Sigmoid colon (tissue), 7 donors: ENCODE measurements at regions of chr11 and their contacts with region 1.

Region 1: DNA sequence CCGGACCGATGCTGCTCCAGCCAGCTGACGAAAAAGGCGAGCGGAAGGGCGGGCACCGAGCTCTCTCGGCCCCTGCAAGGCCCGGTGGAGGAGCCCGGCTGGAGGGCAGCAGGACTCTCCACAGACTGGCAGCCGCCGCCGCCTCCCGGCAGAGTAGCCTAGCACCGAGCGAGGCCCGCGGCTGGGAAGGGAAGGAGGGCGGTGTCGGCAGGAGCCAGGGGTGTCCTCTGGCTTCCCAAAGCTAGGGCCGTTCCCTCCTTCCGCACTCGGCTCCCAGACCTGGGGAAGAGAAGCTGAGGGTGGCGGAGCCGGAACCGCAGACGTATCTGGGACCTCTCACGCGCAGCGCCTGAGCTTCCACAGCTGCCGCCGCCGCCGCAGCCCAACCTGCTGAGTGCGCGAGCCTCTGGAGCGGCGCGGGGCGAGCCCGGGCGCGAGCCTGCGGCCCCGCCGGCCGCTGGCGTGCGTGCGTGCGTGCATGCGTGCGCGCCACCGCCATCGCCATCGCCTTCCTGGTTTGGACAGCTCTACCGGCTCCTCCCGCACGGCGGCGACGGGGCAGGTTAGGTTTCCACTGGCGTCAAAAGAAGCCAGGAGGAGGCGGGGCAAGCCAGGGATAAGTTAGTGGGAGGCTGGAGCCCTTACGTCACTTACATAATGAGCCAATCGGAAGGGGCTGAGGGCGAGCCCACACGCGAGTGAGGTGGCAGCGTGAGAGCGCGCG is at the start of gene RAB6A:
- DNase-seq: peak; percentile 100
- H3K4me3 ChIP-seq: peak within 1 kb of the TSS; percentile 72 to 95 (median 82)
- H3K27ac ChIP-seq: peak within 1 kb of the TSS; percentile 97 to 100 (median 98)
- H3K4me1 ChIP-seq: peaks cover 0 to 33% (median 30%) of the 10 kb centered on the region in 4 donors
- H3K27me3 ChIP-seq: no peaks in the 10 kb centered on the region
- CTCF ChIP-seq: peak in 3 of 4 experiments; percentile 22 to 32 (median 26)
- EP300 ChIP-seq: peak in 1 of 4 donors; percentile 38
- POLR2A ChIP-seq: peak; percentile 68 to 82
- total RNA-seq, gene RAB6A: 110 to 162 (median 140) TPM

Region 2: GRCh38 chr11:73779084-73779902 is 18.5 kb after region 1 on chr11:
- intact Hi-C with region 1: loop called (anchors 1 kb)
- DNase-seq: peak; percentile 99
- H3K4me3 ChIP-seq: peak overlapping the region; percentile 43 to 67 (median 52)
- H3K27ac ChIP-seq: peak overlapping the region; percentile 92 to 97 (median 92)
- H3K4me1 ChIP-seq: peaks cover 0 to 5% (median 2%) of the 10 kb centered on the region in 4 donors
- H3K27me3 ChIP-seq: no peaks in the 10 kb centered on the region
- CTCF ChIP-seq: no peak
- EP300 ChIP-seq: no peak
- POLR2A ChIP-seq: peak in 1 of 2 donors; percentile 40

Region 3: GRCh38 chr11:73787643-73788537 is 27.0 kb after region 1 on chr11 and contains the start of gene MRPL48:
- intact Hi-C with region 1: loop called (anchors 2 kb)
- DNase-seq: peak; percentile 94
- H3K4me3 ChIP-seq: peak within 1 kb of the TSS; percentile 54 to 78 (median 73)
- H3K27ac ChIP-seq: peak within 1 kb of the TSS; percentile 79 to 95 (median 80)
- H3K4me1 ChIP-seq: peaks cover 0 to 18% (median 18%) of the 10 kb centered on the region in 4 donors
- H3K27me3 ChIP-seq: no peaks in the 10 kb centered on the region
- CTCF ChIP-seq: no peak
- EP300 ChIP-seq: no peak
- POLR2A ChIP-seq: no peak
- total RNA-seq, gene MRPL48: 7.7 to 33.2 (median 19.8) TPM

Region 4: GRCh38 chr11:73839123-73839457 is 78.2 kb after region 1 on chr11:
- intact Hi-C with region 1: no loop called
- DNase-seq: no peak
- H3K4me3 ChIP-seq: no peak overlapping the region
- H3K27ac ChIP-seq: no peak overlapping the region
- H3K4me1 ChIP-seq: no peaks in the 10 kb centered on the region
- H3K27me3 ChIP-seq: no peaks in the 10 kb centered on the region
- CTCF ChIP-seq: no peak
- EP300 ChIP-seq: no peak
- POLR2A ChIP-seq: no peak

Region 5: DNA sequence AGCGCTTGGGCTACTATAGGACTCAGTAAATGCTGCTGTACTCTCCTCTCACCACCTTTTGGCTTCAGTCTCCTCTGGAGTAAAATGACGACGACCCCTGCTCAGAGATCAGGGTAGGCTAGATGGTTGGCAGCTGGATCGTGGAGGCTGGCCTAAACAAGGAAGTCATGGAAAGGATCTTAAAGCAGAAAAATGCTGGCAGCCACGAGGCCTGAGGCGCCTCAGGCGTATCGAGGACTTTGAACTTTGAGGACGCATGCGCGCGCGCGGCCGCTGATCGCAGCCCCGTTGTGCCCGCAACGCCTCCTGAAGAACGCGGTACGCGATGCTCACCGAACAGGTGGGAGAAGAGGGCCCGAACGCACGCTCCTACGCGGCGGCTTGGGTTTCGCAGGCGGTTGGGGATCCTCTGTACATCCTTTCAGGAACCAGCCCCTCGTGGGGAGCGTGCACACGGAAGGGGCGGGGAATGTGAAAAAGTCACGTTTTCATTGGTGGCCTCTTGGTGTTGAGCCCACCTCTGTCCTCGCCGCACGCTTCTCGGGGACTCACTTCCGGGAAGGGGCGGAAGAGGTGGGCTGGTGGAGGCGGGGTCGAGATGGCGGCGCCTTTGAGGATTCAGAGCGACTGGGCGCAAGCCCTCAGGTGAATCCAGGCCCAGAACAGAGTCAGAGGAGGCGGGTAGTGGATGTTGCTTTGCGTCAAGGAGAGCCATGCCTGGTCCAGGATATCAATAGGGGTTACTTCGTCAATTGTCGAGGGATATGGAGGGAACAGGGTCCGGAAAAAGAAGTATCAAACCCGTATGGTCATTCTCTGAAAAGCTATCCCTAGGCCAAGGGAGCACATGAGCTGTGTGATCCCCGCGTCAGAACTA is 115.8 kb after region 1 on chr11 and contains the starts of genes COA4 and PAAF1:
- intact Hi-C with region 1: loop called (anchors 2 kb)
- DNase-seq: peak; percentile 97
- H3K4me3 ChIP-seq: peak within 1 kb of the TSS; percentile 69 to 83 (median 76)
- H3K27ac ChIP-seq: peak within 1 kb of the TSS; percentile 82 to 92 (median 87)
- H3K4me1 ChIP-seq: peaks cover 0 to 22% (median 17%) of the 10 kb centered on the region in 4 donors
- H3K27me3 ChIP-seq: no peaks in the 10 kb centered on the region
- CTCF ChIP-seq: no peak
- EP300 ChIP-seq: no peak
- POLR2A ChIP-seq: peak in 1 of 2 donors; percentile 38
- total RNA-seq, gene COA4: 64.3 to 87.4 (median 75.8) TPM
- total RNA-seq, gene PAAF1: 16.7 to 20.7 (median 19.6) TPM

Region 6: DNA sequence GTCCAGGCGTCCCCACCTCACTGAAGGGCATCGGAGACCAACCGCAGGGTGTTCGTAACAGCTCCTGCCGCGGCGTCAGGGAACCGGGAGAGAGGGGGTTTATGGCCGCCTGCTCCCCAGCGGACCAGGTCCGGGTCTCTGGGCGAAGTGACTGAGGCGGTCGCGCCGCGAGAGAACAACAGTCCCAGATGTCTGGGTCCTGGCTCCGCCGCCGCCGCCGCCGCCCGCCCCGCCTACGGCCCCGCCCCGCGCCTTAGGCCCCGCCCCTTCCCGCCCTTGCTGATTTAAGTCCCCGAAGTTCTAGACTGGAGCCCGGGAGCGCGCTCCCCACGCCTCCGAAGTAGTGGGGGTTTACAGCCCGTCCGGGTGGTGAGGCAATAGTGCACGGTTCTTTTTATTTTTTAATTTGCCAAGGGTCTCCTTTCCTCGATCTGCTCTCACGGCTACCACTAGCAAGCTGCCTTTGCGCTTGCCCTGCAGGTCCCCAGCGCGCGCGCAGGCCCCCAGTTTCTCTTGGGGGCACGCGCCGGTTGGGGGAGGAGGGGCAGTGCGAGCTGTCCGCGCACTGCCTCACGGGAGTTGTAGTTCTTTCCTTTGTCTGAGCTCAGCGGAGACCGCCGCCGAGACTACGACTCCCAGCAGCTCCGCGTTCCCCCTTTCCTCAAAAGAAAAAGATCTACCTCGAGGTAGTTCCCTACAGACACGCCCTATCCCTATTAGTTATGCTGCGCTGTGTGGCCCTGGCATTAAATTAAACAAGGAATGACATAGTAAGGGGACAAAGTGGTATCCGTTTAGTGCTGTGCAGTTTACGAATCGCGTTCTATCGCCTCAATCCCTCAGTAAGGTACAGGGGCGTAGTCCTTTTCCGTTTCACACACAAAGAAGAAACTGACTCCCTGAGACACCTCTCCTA is 637.7 kb after region 1 on chr11 and contains the start of gene PGM2L1:
- intact Hi-C with region 1: loop called (anchors 5 kb)
- DNase-seq: peak; percentile 97
- H3K4me3 ChIP-seq: peak within 1 kb of the TSS; percentile 85 to 89 (median 86)
- H3K27ac ChIP-seq: peak within 1 kb of the TSS; percentile 89 to 93 (median 92)
- H3K4me1 ChIP-seq: peaks cover 0 to 7% (median 6%) of the 10 kb centered on the region in 4 donors
- H3K27me3 ChIP-seq: no peaks in the 10 kb centered on the region
- CTCF ChIP-seq: no peak
- EP300 ChIP-seq: peak in 1 of 4 donors; percentile 13
- POLR2A ChIP-seq: peak in 1 of 2 donors; percentile 24
- total RNA-seq, gene PGM2L1: 7.6 to 13.4 (median 8.9) TPM